GM12878 (cell line): ENCODE measurements at regions of chr1 and their contacts with region 1.

Region 1: GRCh38 chr1:23916209-23917131 is 3.3 kb upstream of the CNR2 start:
- DNase-seq: peak; percentile 53
- ATAC-seq: peak; percentile 90
- H3K4me3 ChIP-seq: no peak overlapping the region
- H3K27ac ChIP-seq: peak overlapping the region; percentile 71
- H3K4me1 ChIP-seq: peaks cover 31% of the 10 kb centered on the region
- H3K27me3 ChIP-seq: no peaks in the 10 kb centered on the region
- CTCF ChIP-seq: peak; percentile 86 to 94 (median 88)
- EP300 ChIP-seq: no peak
- POLR2A ChIP-seq: no peak
- RAD21 ChIP-seq: peak; percentile 96

Region 2: GRCh38 chr1:23496490-23497181 is 419.8 kb before region 1 on chr1:
- CTCF ChIA-PET with region 1: no interaction called
- POLR2A ChIA-PET with region 1: no interaction called
- RAD21 ChIA-PET with region 1: no interaction called
- SMC1A ChIA-PET with region 1: no interaction called
- in situ Hi-C with region 1: no loop called
- intact Hi-C with region 1: no loop called
- DNase-seq: no peak
- ATAC-seq: peak; percentile 26; the same call in 2 of the 3 replicates
- H3K4me3 ChIP-seq: no peak overlapping the region
- H3K27ac ChIP-seq: no peak overlapping the region
- H3K4me1 ChIP-seq: no peaks in the 10 kb centered on the region
- H3K27me3 ChIP-seq: no peaks in the 10 kb centered on the region
- CTCF ChIP-seq: no peak
- EP300 ChIP-seq: no peak
- POLR2A ChIP-seq: no peak
- RAD21 ChIP-seq: no peak

Region 3: DNA sequence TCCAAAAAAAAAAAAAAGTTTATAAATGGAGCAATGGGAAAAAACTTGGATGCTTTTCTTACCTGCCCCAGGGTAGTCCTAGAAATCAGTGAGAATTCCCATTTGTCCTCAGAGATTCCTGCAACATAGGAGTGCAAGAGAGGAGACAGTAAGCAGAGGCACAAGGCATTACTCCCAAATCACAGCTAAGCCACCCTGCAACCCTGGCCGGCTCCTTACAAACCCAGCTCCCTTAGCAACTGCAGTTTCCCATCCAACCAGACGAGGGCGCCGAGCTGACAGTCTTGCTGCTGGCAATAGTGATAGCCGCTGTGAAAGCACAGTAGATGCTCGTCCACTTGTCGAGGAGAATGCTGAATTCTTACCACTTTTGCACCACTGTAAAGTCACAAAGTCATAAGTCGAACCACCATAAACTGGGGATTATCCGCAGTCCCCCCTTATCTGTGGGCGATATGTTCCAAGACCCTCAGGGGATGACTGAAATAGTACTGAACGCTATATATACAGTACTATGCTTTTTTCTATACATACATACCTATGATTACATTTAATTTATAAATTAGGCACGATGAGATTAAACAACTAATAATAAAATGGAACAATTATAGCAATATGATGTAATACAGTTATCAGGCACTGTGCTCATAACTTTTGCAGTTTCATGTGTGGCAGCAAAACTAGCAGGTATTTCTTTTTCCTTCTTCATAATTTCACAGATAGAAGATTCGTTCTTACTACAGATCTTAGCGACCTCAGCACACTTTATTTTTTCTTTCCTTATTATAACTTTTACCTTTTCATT is 144.2 kb before region 1 on chr1:
- CTCF ChIA-PET with region 1: interaction called, 130 read pairs
- POLR2A ChIA-PET with region 1: interaction called, 4 read pairs
- RAD21 ChIA-PET with region 1: interaction called, 80 read pairs
- SMC1A ChIA-PET with region 1: interaction called, 69 read pairs
- in situ Hi-C with region 1: loop called (anchors 5 kb)
- intact Hi-C with region 1: loop called (anchors 1 kb)
- DNase-seq: peak; percentile 27
- ATAC-seq: peak; percentile 99
- H3K4me3 ChIP-seq: no peak overlapping the region
- H3K27ac ChIP-seq: no peak overlapping the region
- H3K4me1 ChIP-seq: peaks cover 12% of the 10 kb centered on the region
- H3K27me3 ChIP-seq: no peaks in the 10 kb centered on the region
- CTCF ChIP-seq: peak; percentile 97 to 98 (median 98); a peak in 5 of 6 replicates
- EP300 ChIP-seq: no peak
- POLR2A ChIP-seq: no peak
- RAD21 ChIP-seq: peak; percentile 91

Region 4: DNA sequence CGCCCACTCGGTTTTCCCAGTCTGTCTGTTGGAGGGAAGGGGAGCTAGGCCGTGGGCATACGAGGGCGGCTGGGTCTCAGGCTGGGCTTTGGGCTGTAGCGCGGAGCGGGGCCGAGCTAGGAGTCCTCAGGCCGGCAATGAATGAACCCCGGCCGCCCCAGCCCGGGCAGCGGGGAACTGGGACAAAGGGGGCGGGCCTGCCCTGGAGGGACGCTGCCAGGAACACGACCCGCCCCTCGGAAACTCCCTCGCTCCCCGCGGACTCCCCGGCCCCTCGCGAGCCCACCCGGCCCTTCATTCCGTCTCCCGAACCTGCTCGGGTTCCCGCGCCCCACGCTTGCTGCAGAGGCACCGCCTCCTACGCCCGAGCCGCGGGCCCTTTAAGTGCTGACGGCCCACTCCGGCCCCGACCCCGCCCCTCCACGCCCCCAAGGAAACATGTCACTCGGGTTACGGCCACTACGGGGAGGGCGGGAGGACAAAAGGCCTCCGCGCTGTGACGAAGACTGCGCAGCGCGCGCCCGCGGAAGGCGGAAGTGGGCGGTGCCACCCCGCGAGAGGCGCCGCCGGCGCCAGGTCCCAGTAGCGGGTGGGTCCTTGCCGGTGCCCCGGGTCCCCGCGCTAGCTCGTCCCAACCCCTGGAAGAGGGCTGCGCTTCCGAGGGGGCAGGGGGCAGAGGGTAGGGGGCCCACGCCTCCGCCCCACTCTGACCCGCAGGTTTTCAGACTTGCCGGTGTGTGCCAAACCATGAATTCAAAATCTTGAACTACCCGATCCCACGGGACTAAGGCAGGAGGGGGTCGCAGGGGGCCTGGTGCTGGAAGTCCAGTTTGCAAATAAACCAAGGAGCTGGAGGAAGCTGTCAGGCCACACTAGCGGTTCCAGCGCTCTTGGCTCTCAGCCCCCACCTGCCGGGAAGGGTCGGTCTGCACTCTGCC is 115.8 kb before region 1 on chr1 and contains the start of gene GALE:
- CTCF ChIA-PET with region 1: interaction called, 63 read pairs
- POLR2A ChIA-PET with region 1: interaction called, 3 read pairs
- RAD21 ChIA-PET with region 1: interaction called, 15 read pairs
- SMC1A ChIA-PET with region 1: interaction called, 16 read pairs
- in situ Hi-C with region 1: loop called (anchors 5 kb)
- intact Hi-C with region 1: no loop called
- DNase-seq: peak; percentile 68
- ATAC-seq: peak; percentile 93
- H3K4me3 ChIP-seq: peak within 1 kb of the TSS; percentile 80
- H3K27ac ChIP-seq: peak within 1 kb of the TSS; percentile 70
- H3K4me1 ChIP-seq: peaks cover 9% of the 10 kb centered on the region
- H3K27me3 ChIP-seq: no peaks in the 10 kb centered on the region
- CTCF ChIP-seq: no peak
- EP300 ChIP-seq: no peak
- POLR2A ChIP-seq: peak; percentile 83
- RAD21 ChIP-seq: no peak
- polyA plus RNA-seq, gene GALE: 4.2 to 10.0 TPM

Region 5: DNA sequence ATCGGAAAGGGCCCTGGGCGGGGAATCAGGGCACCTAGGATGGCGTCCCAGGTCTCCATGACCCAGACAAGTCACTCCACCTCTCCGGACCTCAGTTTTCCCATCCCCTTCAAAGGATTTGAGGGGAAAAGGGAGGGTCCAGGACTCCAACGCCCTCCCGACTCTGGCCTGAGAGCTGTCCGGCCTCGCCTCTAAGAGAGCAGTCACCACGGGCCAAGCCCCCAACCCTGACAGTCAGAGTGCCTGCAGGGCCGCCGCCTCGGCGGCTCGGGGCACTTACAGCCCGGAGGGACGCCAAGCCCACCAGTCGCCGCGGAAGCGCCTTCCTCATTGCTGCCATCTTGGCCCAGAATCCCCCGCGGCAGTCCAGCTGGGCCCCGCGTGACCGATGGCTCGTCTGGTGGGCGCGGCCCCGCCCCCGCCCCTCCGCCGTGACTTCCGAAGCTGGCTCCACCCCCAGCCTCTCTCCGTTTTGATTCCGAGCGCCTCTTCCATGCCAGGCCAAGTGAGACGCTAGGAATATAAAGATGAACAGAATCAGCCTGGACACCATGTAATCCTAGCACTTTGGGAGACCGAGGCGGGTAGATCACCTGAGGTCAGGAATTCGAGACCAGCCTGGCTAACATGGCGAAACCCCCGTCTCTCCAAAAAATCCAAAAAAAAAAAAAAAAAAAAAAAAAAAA is 91.3 kb before region 1 on chr1 and contains the start of gene HMGCL:
- CTCF ChIA-PET with region 1: interaction called, 19 read pairs
- POLR2A ChIA-PET with region 1: interaction called, 22 read pairs
- RAD21 ChIA-PET with region 1: interaction called, 9 read pairs
- SMC1A ChIA-PET with region 1: interaction called, 9 read pairs
- in situ Hi-C with region 1: no loop called
- intact Hi-C with region 1: no loop called
- DNase-seq: peak; percentile 55
- ATAC-seq: peak; percentile 99
- H3K4me3 ChIP-seq: peak within 1 kb of the TSS; percentile 83
- H3K27ac ChIP-seq: peak within 1 kb of the TSS; percentile 82
- H3K4me1 ChIP-seq: no peaks in the 10 kb centered on the region
- H3K27me3 ChIP-seq: no peaks in the 10 kb centered on the region
- CTCF ChIP-seq: no peak
- EP300 ChIP-seq: no peak
- POLR2A ChIP-seq: peak; percentile 99
- RAD21 ChIP-seq: no peak
- polyA plus RNA-seq, gene HMGCL: 75.9 to 127 TPM

Region 6: DNA sequence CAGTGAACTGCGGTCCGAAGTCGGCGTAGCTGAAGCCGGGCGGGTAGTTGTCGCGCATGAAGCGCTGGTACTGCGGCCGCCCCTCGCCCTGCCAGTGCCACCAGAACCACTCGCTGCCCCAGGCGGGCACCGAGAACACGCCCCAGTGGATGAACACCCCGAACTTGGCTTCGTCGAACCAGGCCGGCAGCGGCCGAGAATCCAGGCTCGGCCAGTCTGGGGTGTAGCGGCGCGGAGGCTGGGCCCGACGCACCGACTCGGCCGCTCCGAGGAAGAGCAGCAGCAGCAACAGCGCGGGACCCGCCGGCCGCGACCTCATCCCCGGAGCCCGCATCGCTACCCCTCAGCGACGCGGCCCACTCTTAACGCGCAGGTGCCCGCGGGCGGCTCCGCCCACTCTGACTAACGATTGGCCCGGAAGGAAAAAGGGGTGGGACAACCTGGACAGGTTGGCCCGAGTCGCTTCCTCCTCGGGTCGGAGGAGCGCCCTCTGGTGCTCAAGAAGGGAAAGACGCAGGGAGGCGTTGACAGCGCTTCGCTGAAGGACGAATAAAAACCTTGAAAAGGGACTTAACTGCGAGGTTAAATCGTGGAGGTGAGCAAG is 48.4 kb before region 1 on chr1 and contains the start of gene FUCA1:
- CTCF ChIA-PET with region 1: interaction called, 18 read pairs
- POLR2A ChIA-PET with region 1: interaction called, 8 read pairs
- RAD21 ChIA-PET with region 1: interaction called, 9 read pairs
- SMC1A ChIA-PET with region 1: interaction called, 10 read pairs
- in situ Hi-C with region 1: no loop called
- intact Hi-C with region 1: loop called (anchors 2 kb)
- DNase-seq: peak; percentile 72
- ATAC-seq: peak; percentile 92
- H3K4me3 ChIP-seq: peak within 1 kb of the TSS; percentile 77
- H3K27ac ChIP-seq: peak within 1 kb of the TSS; percentile 63
- H3K4me1 ChIP-seq: peaks cover 10% of the 10 kb centered on the region
- H3K27me3 ChIP-seq: no peaks in the 10 kb centered on the region
- CTCF ChIP-seq: peak; percentile 94 to 96 (median 96)
- EP300 ChIP-seq: no peak
- POLR2A ChIP-seq: peak; percentile 91
- RAD21 ChIP-seq: peak; percentile 68
- polyA plus RNA-seq, gene FUCA1: 33.3 to 41.8 TPM